Colonic mucosa (tissue), 4 donors: ENCODE measurements at regions of chr5 and their contacts with region 1.

Region 1: DNA sequence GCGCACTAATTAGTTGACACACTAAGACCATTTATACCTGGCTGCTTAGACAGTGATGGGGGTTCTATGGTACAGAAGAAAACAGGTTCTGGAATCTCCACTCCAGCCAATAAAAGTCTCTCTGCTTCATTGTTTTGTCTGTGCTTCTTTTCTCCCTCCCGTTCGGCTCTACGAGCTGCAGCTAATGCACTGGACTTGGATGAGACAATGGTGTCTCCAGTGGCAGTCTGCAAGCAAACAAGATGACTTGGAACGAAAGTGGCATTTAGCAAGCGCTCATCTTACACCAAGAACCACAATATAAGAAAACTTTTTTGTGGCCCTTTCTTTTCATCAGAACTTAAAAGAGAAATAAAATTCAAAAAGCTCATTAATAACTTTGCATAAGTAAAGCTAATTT is 30.2 kb downstream of the GFM2 start:
- DNase-seq: no peak
- H3K4me3 ChIP-seq: no peak overlapping the region
- H3K27ac ChIP-seq: no peak overlapping the region
- H3K4me1 ChIP-seq: no peaks in the 10 kb centered on the region
- H3K27me3 ChIP-seq: no peaks in the 10 kb centered on the region
- CTCF ChIP-seq: no peak

Region 2: DNA sequence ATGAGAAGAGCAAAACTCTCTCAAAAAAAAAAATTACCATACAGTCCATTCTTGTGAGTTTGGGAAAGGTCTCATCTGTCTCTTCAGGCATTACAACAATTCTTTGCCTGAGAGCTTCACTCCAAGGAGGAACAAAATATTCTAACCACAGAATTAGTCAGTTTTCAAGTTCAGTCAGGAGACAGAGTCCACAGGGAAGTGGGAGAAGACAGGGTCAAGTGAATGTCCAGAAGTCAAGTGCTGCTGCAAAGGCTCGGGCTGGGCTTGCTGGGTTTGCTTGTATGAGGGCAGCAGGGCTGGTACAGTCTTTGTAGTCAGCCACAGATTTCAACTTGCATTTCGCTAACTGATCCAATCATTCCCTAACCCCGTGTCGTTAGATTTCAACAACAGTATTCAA is 69.4 kb before region 1 on chr5:
- intact Hi-C with region 1: loop called (anchors 10 kb)
- DNase-seq: no peak
- H3K4me3 ChIP-seq: no peak overlapping the region
- H3K27ac ChIP-seq: no peak overlapping the region
- H3K4me1 ChIP-seq: no peaks in the 10 kb centered on the region
- H3K27me3 ChIP-seq: no peaks in the 10 kb centered on the region
- CTCF ChIP-seq: no peak